ENCODE measurements at regions of chr6 and their contacts with region 1.

Region 1: GRCh38 chr6:155154158-155154830 is 109.5 kb upstream of the CLDN20 start:
- DNase-seq: peak in 1 of 9 donors; percentile 56
- ATAC-seq: no peak
- H3K4me3 ChIP-seq: no peak overlapping the region
- H3K4me3 Mint-ChIP-seq: peak overlapping the region in 1 of 10 donors; percentile 63
- H3K27ac ChIP-seq: no peak overlapping the region
- H3K27ac Mint-ChIP-seq: peak overlapping the region in 1 of 9 donors; percentile 95
- H3K4me1 ChIP-seq: peaks cover 5 to 12% of the 10 kb centered on the region in 2 donors
- H3K4me1 Mint-ChIP-seq: peaks cover 0 to 72% (median 14%) of the 10 kb centered on the region in 7 donors
- H3K27me3 ChIP-seq: no peaks in the 10 kb centered on the region
- H3K27me3 Mint-ChIP-seq: peaks cover 0 to 8% (median 4%) of the 10 kb centered on the region in 5 donors

Region 2: DNA sequence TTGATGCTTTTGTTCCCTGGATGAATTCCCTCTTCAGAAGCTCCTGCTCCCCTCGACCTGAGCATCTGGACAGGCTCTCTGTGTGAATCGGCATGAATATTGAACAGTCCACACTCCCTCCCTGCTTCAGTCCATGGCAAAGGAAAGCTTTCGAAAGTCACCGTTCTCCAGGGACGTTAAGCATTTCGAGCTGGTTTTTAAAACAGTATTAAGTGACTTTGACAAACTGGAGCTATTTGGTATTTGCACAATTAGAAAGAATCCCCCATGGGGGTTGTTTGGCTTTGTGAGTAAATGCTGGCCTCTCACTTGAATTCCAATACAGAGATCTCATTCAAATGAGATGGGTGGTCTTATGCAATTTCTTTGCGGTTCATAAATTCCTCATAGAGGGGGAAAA is 244.5 kb before region 1 on chr6:
- CTCF ChIA-PET with region 1: no interaction called
- POLR2A ChIA-PET with region 1: no interaction called
- intact Hi-C with region 1: no loop called
- DNase-seq: no peak
- ATAC-seq: no peak
- H3K4me3 ChIP-seq: no peak overlapping the region
- H3K4me3 Mint-ChIP-seq: no peak overlapping the region
- H3K27ac ChIP-seq: no peak overlapping the region
- H3K27ac Mint-ChIP-seq: no peak overlapping the region
- H3K4me1 ChIP-seq: no peaks in the 10 kb centered on the region
- H3K4me1 Mint-ChIP-seq: peaks cover 0 to 1% (median 0%) of the 10 kb centered on the region in 7 donors
- H3K27me3 ChIP-seq: no peaks in the 10 kb centered on the region
- H3K27me3 Mint-ChIP-seq: no peaks in the 10 kb centered on the region

Region 3: DNA sequence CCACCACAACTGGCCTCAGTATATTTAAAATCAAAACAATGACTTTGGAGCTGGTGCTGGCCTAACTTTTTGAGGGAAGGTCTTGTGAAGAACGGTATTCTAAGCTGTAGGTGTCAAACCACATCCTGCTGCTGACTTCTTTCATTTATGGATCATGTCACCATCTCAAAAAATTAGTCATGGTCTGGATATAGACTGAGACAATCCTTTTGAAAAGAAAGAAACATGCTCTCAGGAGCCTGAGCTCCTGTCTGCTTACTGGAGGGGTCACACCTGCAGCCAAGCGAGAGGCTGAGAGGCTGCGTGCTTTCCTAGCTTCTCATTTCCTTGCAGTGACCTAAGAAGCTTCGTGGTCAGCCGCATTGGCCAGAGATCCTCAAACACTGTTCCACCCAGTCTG is 104.0 kb before region 1 on chr6:
- CTCF ChIA-PET with region 1: no interaction called
- POLR2A ChIA-PET with region 1: no interaction called
- intact Hi-C with region 1: loop called in 1 of 2 experiments (anchors 5 kb)
- DNase-seq: peak in 2 of 9 donors; percentile 4 to 44
- ATAC-seq: peak; percentile 16
- H3K4me3 ChIP-seq: no peak overlapping the region
- H3K4me3 Mint-ChIP-seq: peak overlapping the region in 1 of 10 donors; percentile 57
- H3K27ac ChIP-seq: no peak overlapping the region
- H3K27ac Mint-ChIP-seq: peak overlapping the region in 1 of 9 donors; percentile 79
- H3K4me1 ChIP-seq: peaks cover 0 to 16% of the 10 kb centered on the region in 2 donors
- H3K4me1 Mint-ChIP-seq: peaks cover 2 to 27% (median 5%) of the 10 kb centered on the region in 7 donors
- H3K27me3 ChIP-seq: no peaks in the 10 kb centered on the region
- H3K27me3 Mint-ChIP-seq: peaks cover 0 to 11% (median 0%) of the 10 kb centered on the region in 5 donors

Region 4: DNA sequence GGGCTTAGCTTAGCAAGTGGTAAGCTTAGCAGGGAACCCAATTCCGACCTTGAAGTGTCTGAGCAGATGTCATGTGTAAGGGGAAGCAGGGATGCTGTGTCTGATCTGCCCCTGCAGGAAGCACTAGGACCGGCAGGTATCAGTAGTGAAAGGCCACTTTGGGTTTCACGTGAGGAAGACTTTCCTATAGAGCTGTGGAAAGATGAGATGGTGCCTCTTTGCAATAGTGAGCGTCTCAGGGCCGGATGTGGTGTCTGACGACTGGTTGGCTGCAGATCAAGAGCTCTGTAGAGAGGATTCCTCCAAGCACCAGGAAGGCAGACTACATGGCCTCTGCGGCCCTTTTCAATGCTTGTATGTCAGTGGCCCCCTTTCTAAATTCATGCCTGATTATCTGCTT is 60.9 kb before region 1 on chr6:
- CTCF ChIA-PET with region 1: no interaction called
- POLR2A ChIA-PET with region 1: no interaction called
- intact Hi-C with region 1: no loop called
- DNase-seq: peak in 1 of 9 donors; percentile 1
- ATAC-seq: peak; percentile 48
- H3K4me3 ChIP-seq: no peak overlapping the region
- H3K4me3 Mint-ChIP-seq: no peak overlapping the region
- H3K27ac ChIP-seq: no peak overlapping the region
- H3K27ac Mint-ChIP-seq: no peak overlapping the region
- H3K4me1 ChIP-seq: peaks cover 0 to 9% of the 10 kb centered on the region in 2 donors
- H3K4me1 Mint-ChIP-seq: no peaks in the 10 kb centered on the region
- H3K27me3 ChIP-seq: no peaks in the 10 kb centered on the region
- H3K27me3 Mint-ChIP-seq: peaks cover 0 to 6% (median 0%) of the 10 kb centered on the region in 5 donors

Region 5: DNA sequence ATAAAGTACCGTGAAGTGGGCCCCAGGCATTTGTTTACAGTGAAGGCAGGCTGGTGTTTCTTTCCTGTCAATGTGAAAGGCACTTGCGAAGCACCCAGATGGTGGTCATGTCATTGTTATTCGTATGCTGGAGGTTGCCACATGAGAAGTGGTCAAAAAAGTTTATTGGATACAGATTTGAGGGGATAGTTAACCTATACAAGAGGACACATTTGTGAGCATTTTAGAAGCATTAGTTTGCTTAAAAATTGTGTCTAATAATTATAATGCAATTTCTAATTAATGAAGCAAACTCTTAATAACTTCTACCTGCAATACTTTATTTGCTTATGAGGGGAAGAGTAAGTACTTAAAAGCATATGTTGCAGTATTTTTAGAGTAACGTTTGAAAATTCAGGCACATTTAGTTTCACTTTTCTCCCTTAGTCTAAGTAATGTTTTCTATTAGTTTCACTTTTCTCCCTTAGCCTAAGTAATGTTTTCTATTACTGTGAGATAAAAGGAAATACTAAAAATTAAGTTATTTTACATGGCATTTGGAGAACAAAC is 11.2 kb before region 1 on chr6:
- CTCF ChIA-PET with region 1: interaction called, 3 read pairs
- POLR2A ChIA-PET with region 1: no interaction called
- intact Hi-C with region 1: loop called in 1 of 2 experiments (anchors 1 kb)
- DNase-seq: peak in 3 of 9 donors; percentile 4 to 15 (median 8)
- ATAC-seq: no peak
- H3K4me3 ChIP-seq: peak overlapping the region; percentile 27
- H3K4me3 Mint-ChIP-seq: peak overlapping the region; percentile 56 to 91 (median 82)
- H3K27ac ChIP-seq: peak overlapping the region; percentile 49
- H3K27ac Mint-ChIP-seq: peak overlapping the region; percentile 83 to 96 (median 90)
- H3K4me1 ChIP-seq: peaks cover 7 to 14% of the 10 kb centered on the region in 2 donors
- H3K4me1 Mint-ChIP-seq: peaks cover 13 to 43% (median 24%) of the 10 kb centered on the region in 7 donors
- H3K27me3 ChIP-seq: no peaks in the 10 kb centered on the region
- H3K27me3 Mint-ChIP-seq: no peaks in the 10 kb centered on the region

Region 6: GRCh38 chr6:155200012-155200411 is 45.7 kb after region 1 on chr6:
- CTCF ChIA-PET with region 1: no interaction called
- POLR2A ChIA-PET with region 1: no interaction called
- intact Hi-C with region 1: no loop called
- DNase-seq: no peak
- ATAC-seq: peak; percentile 45
- H3K4me3 ChIP-seq: no peak overlapping the region
- H3K4me3 Mint-ChIP-seq: no peak overlapping the region
- H3K27ac ChIP-seq: no peak overlapping the region
- H3K27ac Mint-ChIP-seq: no peak overlapping the region
- H3K4me1 ChIP-seq: no peaks in the 10 kb centered on the region
- H3K4me1 Mint-ChIP-seq: peaks cover 0 to 2% (median 0%) of the 10 kb centered on the region in 7 donors
- H3K27me3 ChIP-seq: no peaks in the 10 kb centered on the region
- H3K27me3 Mint-ChIP-seq: peaks cover 0 to 6% (median 3%) of the 10 kb centered on the region in 5 donors